BJ (cell line): ENCODE measurements at regions of chr1 and their contacts with region 1.

Region 1: DNA sequence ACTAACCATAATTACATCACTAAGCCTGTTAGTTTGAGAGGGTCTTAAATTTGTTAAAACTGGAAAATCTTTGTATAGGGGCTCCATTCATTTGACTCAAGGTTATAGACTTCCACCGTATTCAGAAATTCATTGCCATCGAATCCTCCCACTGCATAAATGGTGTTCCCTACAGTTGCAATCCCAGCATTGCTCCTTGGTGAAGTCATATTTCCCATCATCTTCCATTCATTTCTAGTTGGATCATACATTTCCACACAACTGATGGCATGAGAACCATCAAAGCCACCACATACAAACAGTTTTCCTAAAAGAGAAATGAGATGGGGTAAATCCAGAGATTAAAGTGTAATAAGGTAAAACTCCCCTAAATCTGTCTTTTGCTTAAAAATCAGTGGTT is 19.1 kb downstream of the IVNS1ABP start:
- DNase-seq: no peak
- H3K4me3 ChIP-seq: no peak overlapping the region
- H3K27me3 ChIP-seq: no peaks in the 10 kb centered on the region
- CTCF ChIP-seq: no peak

Region 2: DNA sequence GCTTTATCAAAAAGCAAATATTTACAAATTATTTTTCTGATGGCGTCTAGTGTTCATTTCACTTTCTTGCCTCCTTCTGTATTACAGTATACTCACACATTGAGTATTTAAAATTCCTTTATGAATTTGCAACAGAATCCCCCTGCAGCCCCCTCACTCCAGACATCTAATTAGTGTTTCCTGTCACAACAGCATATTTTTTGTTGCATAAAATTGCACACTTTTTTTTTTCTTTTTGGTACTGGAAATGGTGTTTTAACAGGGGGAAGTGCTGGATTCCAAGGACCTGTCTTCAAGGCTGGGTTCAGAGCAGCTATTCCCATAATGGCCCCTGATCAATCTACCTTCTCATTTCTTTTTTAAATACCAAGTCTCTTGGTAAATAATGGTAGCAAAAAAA is 251.9 kb after region 1 on chr1:
- CTCF ChIA-PET with region 1: no interaction called
- POLR2A ChIA-PET with region 1: interaction called, 13 read pairs
- DNase-seq: no peak
- H3K4me3 ChIP-seq: no peak overlapping the region
- H3K27me3 ChIP-seq: no peaks in the 10 kb centered on the region
- CTCF ChIP-seq: no peak